Activated T-helper 1 cell treated with anti-CD3 and anti-CD28 coated beads, Interleukin-12 subunit alpha, Interleukin-12 subunit beta, Interleukin-2, Interleukin-4 antibody, amounts not matched to agents 30 ng/mL and 10 ng/mL and 1 ng/mL, durations not matched to agents 14 hours and 24 hours and 36 hours (primary cell): ENCODE measurements at regions of chr9 and their contacts with region 1.

Region 1: GRCh38 chr9:27529316-27530278 is at the start of gene MOB3B:
- DNase-seq: peak; percentile 66
- H3K4me3 Mint-ChIP-seq: peak within 1 kb of the TSS; percentile 85
- H3K27ac Mint-ChIP-seq: peak within 1 kb of the TSS; percentile 61
- H3K4me1 Mint-ChIP-seq: peaks cover 4% of the 10 kb centered on the region
- H3K27me3 Mint-ChIP-seq: peaks cover 49% of the 10 kb centered on the region
- total RNA-seq, gene MOB3B: 0.17 and 0.26 TPM in 2 replicates

Region 2: GRCh38 chr9:26946753-26947727 is 582.6 kb before region 1 on chr9 and contains the start of gene PLAA:
- intact Hi-C with region 1: loop called (anchors 2 kb)
- DNase-seq: peak; percentile 82
- H3K4me3 Mint-ChIP-seq: peak within 1 kb of the TSS; percentile 95
- H3K27ac Mint-ChIP-seq: peak within 1 kb of the TSS; percentile 100
- H3K4me1 Mint-ChIP-seq: peaks cover 48% of the 10 kb centered on the region
- H3K27me3 Mint-ChIP-seq: no peaks in the 10 kb centered on the region
- total RNA-seq, gene PLAA: 46.9 and 48.6 TPM in 2 replicates

Region 3: GRCh38 chr9:27365707-27366376 is 163.8 kb before region 1 on chr9:
- intact Hi-C with region 1: loop called (anchors 1 kb)
- DNase-seq: peak; percentile 49
- H3K4me3 Mint-ChIP-seq: peak overlapping the region; percentile 9
- H3K27ac Mint-ChIP-seq: peak overlapping the region; percentile 56
- H3K4me1 Mint-ChIP-seq: peaks cover 32% of the 10 kb centered on the region
- H3K27me3 Mint-ChIP-seq: peaks cover 10% of the 10 kb centered on the region

Region 4: DNA sequence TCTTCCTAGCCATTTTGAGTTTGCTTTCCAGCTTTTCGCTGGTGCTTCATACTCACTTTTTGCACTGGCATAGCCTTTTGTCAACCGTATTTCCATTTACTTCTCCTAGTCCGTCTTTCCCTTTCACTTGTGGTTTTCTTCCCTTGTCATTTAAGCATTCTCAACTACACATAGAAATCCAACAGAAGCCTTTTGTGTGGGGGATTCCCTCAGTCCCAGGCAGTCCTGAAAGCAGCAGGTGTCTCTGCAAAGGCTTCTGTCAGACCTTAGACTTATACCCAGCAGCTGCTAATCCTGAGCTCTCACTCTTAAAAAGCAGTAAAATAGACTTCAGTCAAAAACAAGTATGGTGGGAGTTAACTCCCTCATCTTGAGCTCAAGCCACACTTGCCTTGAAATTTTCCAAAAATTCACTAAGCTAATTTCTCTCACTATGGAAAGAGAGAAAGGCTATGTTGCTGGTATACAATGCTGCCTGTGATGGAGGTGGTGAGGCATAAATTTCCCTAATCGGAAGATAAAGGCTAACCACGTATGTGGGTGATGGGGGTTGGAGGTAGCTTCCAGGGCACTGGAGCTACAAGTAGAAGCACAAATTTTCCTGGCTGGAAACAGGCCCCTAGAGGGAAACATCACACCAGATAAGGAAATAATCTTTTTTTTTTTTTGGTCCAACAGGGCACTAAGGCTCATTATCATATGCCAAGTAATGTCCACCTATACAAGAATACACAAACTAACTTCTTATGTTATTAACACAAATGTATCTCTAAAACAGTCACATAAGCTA is 40.3 kb before region 1 on chr9:
- intact Hi-C with region 1: loop called (anchors 5 kb)
- DNase-seq: no peak
- H3K4me3 Mint-ChIP-seq: no peak overlapping the region
- H3K27ac Mint-ChIP-seq: no peak overlapping the region
- H3K4me1 Mint-ChIP-seq: peaks cover 29% of the 10 kb centered on the region
- H3K27me3 Mint-ChIP-seq: no peaks in the 10 kb centered on the region

Region 5: DNA sequence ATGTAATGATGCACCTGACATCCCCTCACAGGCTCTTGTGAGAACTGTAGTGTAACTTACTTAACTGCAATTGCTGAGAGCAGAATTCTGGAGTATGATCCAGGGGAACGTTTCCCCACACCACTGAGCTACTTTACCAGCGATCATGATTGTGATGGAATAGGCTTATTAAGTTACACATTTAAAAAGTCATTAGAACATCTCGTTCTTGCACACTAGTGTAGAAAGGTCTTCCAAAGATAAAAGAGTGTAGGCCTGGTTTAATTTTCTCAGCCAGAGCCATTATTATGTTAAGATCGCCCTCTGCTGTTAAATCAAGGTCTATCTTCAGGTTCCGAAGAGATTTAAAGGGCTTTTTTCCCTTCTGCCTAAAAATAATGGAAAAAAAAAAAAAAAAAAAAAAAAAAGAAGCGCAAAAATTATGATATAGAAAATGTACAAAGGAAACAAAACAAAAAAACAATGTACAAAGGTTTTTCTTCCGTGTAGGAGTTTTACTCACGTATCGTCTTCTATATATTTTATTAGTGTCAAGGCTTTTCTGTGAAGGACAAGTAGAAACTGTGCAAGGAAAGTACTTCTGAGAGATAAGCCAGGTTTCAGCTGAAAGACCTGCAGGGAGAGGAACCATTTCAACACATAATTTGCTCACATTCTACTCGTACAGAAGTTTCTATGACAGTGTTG is 18.6 kb after region 1 on chr9:
- intact Hi-C with region 1: loop called (anchors 1 kb)
- DNase-seq: no peak
- H3K4me3 Mint-ChIP-seq: no peak overlapping the region
- H3K27ac Mint-ChIP-seq: no peak overlapping the region
- H3K4me1 Mint-ChIP-seq: no peaks in the 10 kb centered on the region
- H3K27me3 Mint-ChIP-seq: no peaks in the 10 kb centered on the region

Region 6: GRCh38 chr9:27586304-27586703 is 56.7 kb after region 1 on chr9:
- intact Hi-C with region 1: no loop called
- DNase-seq: no peak
- H3K4me3 Mint-ChIP-seq: no peak overlapping the region
- H3K27ac Mint-ChIP-seq: no peak overlapping the region
- H3K4me1 Mint-ChIP-seq: no peaks in the 10 kb centered on the region
- H3K27me3 Mint-ChIP-seq: peaks cover 27% of the 10 kb centered on the region

Region 7: GRCh38 chr9:28456861-28457260 is 927.3 kb after region 1 on chr9:
- intact Hi-C with region 1: no loop called
- DNase-seq: no peak
- H3K4me3 Mint-ChIP-seq: no peak overlapping the region
- H3K27ac Mint-ChIP-seq: no peak overlapping the region
- H3K4me1 Mint-ChIP-seq: no peaks in the 10 kb centered on the region
- H3K27me3 Mint-ChIP-seq: no peaks in the 10 kb centered on the region